HepG2 (cell line): ENCODE measurements at regions of chr4 and their contacts with region 1.

Region 1: DNA sequence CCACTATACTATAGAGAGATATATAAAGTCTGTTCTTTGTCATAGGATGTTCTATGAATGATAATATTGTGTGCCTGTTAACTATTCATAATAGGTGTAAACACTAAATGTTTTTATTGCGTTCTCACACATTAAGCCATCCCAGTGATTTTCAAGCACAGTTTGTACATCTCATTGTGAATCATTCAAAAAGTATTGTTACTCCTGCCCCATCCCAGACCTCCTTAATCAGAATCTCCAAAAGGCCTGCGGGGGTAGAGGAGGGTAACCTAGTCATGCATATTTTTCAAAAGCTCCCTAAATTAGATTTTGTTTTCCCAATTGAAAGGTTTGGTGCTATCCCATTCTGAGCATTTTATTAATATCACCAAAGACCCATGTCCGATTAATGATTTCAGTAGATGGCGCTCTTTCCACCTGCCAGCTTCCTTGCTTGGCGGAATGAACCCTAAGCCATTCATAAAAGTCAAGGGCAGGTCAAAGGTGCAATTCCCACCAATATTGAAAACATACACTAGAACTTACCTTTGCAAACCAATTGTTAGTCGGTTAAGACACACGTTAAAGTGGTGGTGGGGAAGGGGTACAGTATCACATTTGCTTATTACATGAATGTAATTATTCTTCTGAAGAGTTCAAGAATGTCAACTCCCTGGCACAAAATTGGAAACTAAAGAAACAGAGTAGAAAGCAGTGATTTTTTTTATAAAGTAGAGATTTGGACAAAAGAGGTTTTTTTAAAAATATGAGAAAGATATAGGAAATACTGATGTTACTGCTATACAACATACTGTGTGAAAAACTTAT is 5.8 kb upstream of the TET2 start:
- DNase-seq: peak; percentile 54
- ATAC-seq: peak; percentile 73
- H3K4me3 ChIP-seq: no peak overlapping the region
- H3K27ac ChIP-seq: no peak overlapping the region
- H3K4me1 ChIP-seq: peaks cover 20% of the 10 kb centered on the region
- H3K27me3 ChIP-seq: no peaks in the 10 kb centered on the region; a peak in 1 of 5 replicates
- CTCF ChIP-seq: peak; percentile 81
- EP300 ChIP-seq: no peak
- POLR2A ChIP-seq: no peak
- RAD21 ChIP-seq: peak; percentile 77

Region 2: DNA sequence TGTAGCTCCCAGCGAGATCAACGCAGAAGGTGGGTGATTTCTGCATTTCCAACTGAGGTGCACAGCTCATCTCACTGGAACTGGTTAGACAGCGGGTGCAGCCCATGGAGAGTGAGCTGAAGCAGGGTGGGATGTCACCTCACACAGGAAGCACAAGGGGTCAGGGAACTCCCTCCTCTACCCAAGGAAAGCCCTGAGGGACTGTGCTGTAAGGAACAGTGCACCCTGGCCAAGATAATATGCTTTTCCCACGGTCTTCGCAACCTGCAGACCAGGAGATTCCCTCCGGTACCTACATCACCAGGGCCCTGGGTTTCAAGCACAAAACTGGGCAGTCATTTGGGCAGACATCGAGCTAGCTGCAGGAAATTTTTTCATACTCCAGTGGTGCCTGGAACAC is 210.6 kb before region 1 on chr4:
- CTCF ChIA-PET with region 1: no interaction called
- POLR2A ChIA-PET with region 1: no interaction called
- in situ Hi-C with region 1: no loop called
- intact Hi-C with region 1: loop called (anchors 1 kb)
- DNase-seq: no peak
- ATAC-seq: peak; percentile 56
- H3K4me3 ChIP-seq: no peak overlapping the region
- H3K27ac ChIP-seq: no peak overlapping the region
- H3K4me1 ChIP-seq: peaks cover 18% of the 10 kb centered on the region
- H3K27me3 ChIP-seq: no peaks in the 10 kb centered on the region
- CTCF ChIP-seq: no peak
- EP300 ChIP-seq: no peak
- POLR2A ChIP-seq: no peak
- RAD21 ChIP-seq: no peak